Mammary epithelial cell (primary cell): ENCODE measurements at regions of chr2 and their contacts with region 1.

Region 1: GRCh38 chr2:179422037-179422643 is 157.5 kb upstream of the SESTD1 start:
- DNase-seq: peak; percentile 47
- H3K4me3 ChIP-seq: no peak overlapping the region
- H3K27ac ChIP-seq: no peak overlapping the region
- H3K4me1 ChIP-seq: no peaks in the 10 kb centered on the region
- H3K27me3 ChIP-seq: no peaks in the 10 kb centered on the region
- CTCF ChIP-seq: peak; percentile 88 to 92

Region 2: GRCh38 chr2:179218848-179219594 is 203.1 kb before region 1 on chr2:
- CTCF ChIA-PET with region 1: no interaction called
- dilution Hi-C with region 1: no loop called
- in situ Hi-C with region 1: no loop called
- intact Hi-C with region 1: loop called (anchors 1 kb)
- DNase-seq: peak; percentile 65
- H3K4me3 ChIP-seq: no peak overlapping the region
- H3K27ac ChIP-seq: no peak overlapping the region
- H3K4me1 ChIP-seq: no peaks in the 10 kb centered on the region
- H3K27me3 ChIP-seq: no peaks in the 10 kb centered on the region
- CTCF ChIP-seq: peak; percentile 94 to 98

Region 3: GRCh38 chr2:179285060-179285459 is 137.1 kb before region 1 on chr2:
- CTCF ChIA-PET with region 1: no interaction called
- dilution Hi-C with region 1: no loop called
- in situ Hi-C with region 1: no loop called
- intact Hi-C with region 1: no loop called
- DNase-seq: no peak
- H3K4me3 ChIP-seq: no peak overlapping the region
- H3K27ac ChIP-seq: no peak overlapping the region
- H3K4me1 ChIP-seq: no peaks in the 10 kb centered on the region
- H3K27me3 ChIP-seq: no peaks in the 10 kb centered on the region
- CTCF ChIP-seq: no peak

Region 4: GRCh38 chr2:179612108-179612507 is 190.0 kb after region 1 on chr2:
- CTCF ChIA-PET with region 1: no interaction called
- dilution Hi-C with region 1: no loop called
- in situ Hi-C with region 1: no loop called
- intact Hi-C with region 1: loop called (anchors 5 kb)
- DNase-seq: no peak
- H3K4me3 ChIP-seq: no peak overlapping the region
- H3K27ac ChIP-seq: no peak overlapping the region
- H3K4me1 ChIP-seq: no peaks in the 10 kb centered on the region
- H3K27me3 ChIP-seq: no peaks in the 10 kb centered on the region
- CTCF ChIP-seq: no peak

Region 5: DNA sequence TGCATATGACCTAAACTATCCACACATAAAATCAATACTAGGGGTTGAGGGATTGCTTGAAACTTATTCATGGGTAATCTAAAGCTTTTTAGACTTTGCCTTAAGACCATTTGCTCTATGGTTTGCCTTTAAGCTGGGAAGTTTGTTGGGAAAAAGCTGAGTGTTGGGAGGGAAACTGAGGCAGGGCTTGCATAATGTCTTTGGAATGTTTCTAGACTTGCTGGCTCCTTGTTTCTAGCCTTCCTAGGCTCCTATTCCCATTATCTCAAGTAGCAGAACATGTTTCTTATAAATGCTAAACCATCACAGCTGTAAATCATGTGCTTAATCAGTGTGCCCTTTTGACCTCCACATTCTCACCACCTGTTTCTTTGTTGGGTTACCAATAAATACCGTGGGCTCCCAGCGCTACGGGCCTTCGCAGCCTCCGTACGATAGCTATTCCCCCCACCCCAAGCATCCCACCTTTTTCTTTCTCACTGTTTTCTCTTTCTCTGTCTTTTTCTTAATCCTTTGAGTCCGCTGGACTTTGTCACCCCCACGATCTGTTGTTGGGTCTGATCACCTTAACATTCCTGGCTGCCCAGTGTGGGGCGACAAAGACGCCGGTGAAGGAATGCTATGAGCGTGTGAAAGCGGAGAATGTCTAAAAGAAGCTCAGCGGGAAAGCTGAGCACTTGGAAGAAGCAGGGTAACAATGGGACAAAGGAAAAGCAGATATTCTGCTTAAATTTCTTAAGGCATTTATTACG is 634.4 kb after region 1 on chr2:
- CTCF ChIA-PET with region 1: no interaction called
- dilution Hi-C with region 1: no loop called
- in situ Hi-C with region 1: loop called in 1 of 2 experiments (anchors 25 kb)
- intact Hi-C with region 1: no loop called
- DNase-seq: no peak
- H3K4me3 ChIP-seq: no peak overlapping the region
- H3K27ac ChIP-seq: no peak overlapping the region
- H3K4me1 ChIP-seq: no peaks in the 10 kb centered on the region
- H3K27me3 ChIP-seq: no peaks in the 10 kb centered on the region
- CTCF ChIP-seq: no peak

Region 6: GRCh38 chr2:180077295-180077906 is 655.3 kb after region 1 on chr2:
- CTCF ChIA-PET with region 1: no interaction called
- dilution Hi-C with region 1: no loop called
- in situ Hi-C with region 1: loop called in 1 of 2 experiments (anchors 25 kb)
- intact Hi-C with region 1: loop called (anchors 2 kb)
- DNase-seq: peak; percentile 6
- H3K4me3 ChIP-seq: no peak overlapping the region
- H3K27ac ChIP-seq: no peak overlapping the region
- H3K4me1 ChIP-seq: no peaks in the 10 kb centered on the region
- H3K27me3 ChIP-seq: peaks cover 2% of the 10 kb centered on the region
- CTCF ChIP-seq: peak; percentile 79 to 92